Activated T-helper 2 cell treated with anti-CD3 and anti-CD28 coated beads, Interferon-gamma antibody, Interleukin-2, Interleukin-4, amounts not matched to agents 10 μg/mL and 5 μg/mL and 100 μg/mL, durations not matched to agents 14 hours and 24 hours and 36 hours (primary cell): ENCODE measurements at regions of chr18 and their contacts with region 1.

Region 1: GRCh38 chr18:11040823-11041656 is 108.3 kb downstream of the PIEZO2 start:
- DNase-seq: no peak
- H3K4me3 Mint-ChIP-seq: no peak overlapping the region
- H3K27ac Mint-ChIP-seq: no peak overlapping the region
- H3K4me1 Mint-ChIP-seq: no peaks in the 10 kb centered on the region
- H3K27me3 Mint-ChIP-seq: no peaks in the 10 kb centered on the region

Region 2: GRCh38 chr18:10560450-10561045 is 480.5 kb before region 1 on chr18:
- intact Hi-C with region 1: loop called (anchors 2 kb)
- DNase-seq: peak; percentile 31
- H3K4me3 Mint-ChIP-seq: no peak overlapping the region
- H3K27ac Mint-ChIP-seq: no peak overlapping the region
- H3K4me1 Mint-ChIP-seq: peaks cover 7% of the 10 kb centered on the region
- H3K27me3 Mint-ChIP-seq: no peaks in the 10 kb centered on the region

Region 3: GRCh38 chr18:10739152-10739551 is 301.9 kb before region 1 on chr18:
- intact Hi-C with region 1: no loop called
- DNase-seq: no peak
- H3K4me3 Mint-ChIP-seq: no peak overlapping the region
- H3K27ac Mint-ChIP-seq: no peak overlapping the region
- H3K4me1 Mint-ChIP-seq: no peaks in the 10 kb centered on the region
- H3K27me3 Mint-ChIP-seq: no peaks in the 10 kb centered on the region

Region 4: GRCh38 chr18:10787293-10787901 is 253.6 kb before region 1 on chr18:
- intact Hi-C with region 1: loop called (anchors 2 kb)
- DNase-seq: peak; percentile 78
- H3K4me3 Mint-ChIP-seq: no peak overlapping the region
- H3K27ac Mint-ChIP-seq: no peak overlapping the region
- H3K4me1 Mint-ChIP-seq: peaks cover 3% of the 10 kb centered on the region
- H3K27me3 Mint-ChIP-seq: peaks cover 56% of the 10 kb centered on the region

Region 5: GRCh38 chr18:10851824-10852319 is 189.2 kb before region 1 on chr18:
- intact Hi-C with region 1: loop called (anchors 2 kb)
- DNase-seq: no peak
- H3K4me3 Mint-ChIP-seq: no peak overlapping the region
- H3K27ac Mint-ChIP-seq: no peak overlapping the region
- H3K4me1 Mint-ChIP-seq: no peaks in the 10 kb centered on the region
- H3K27me3 Mint-ChIP-seq: peaks cover 4% of the 10 kb centered on the region

Region 6: DNA sequence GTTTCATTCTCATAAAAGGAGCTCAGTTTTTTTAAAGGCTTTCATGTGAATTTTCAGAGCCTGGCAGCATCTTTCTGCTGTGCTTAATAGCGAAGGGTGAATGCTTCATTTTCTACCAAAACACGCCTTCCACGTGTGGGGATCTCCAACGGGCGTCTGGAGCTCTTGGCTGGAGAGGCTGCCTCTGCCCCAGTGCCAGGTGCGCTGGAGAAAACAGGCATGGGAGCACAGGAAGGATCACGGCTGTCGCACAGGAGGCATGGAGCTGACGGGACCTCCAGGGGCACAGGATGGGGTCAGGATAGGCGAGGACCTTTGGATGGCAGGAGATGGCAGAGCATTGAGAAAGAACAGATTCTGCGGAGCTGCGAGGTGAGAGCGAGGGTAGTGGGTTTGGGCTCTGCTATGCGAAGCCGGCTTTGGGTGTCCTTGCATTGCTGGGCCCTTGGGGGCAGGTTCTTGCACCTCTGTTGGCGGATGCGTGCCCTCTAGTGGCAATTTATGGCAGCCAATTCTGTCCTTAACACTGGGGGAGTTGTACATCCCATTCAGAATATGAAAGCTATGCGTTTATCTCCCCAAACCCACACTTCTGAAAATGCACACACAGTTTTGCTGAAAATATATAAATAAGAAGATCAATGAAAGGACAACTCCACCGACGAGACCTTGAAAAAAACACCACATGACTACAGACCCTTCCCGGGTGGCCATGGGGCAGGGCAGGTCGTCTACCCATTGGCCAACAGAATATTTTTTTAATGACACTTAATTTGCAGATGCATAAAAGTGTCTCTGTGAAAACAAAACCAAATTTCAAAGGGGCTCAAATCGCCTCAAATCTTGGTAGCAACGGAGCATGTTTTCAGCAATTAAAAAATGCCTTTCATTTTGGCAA is 478.0 kb after region 1 on chr18:
- intact Hi-C with region 1: no loop called
- DNase-seq: peak; percentile 28
- H3K4me3 Mint-ChIP-seq: no peak overlapping the region
- H3K27ac Mint-ChIP-seq: no peak overlapping the region
- H3K4me1 Mint-ChIP-seq: no peaks in the 10 kb centered on the region
- H3K27me3 Mint-ChIP-seq: peaks cover 3% of the 10 kb centered on the region